Motor neuron (in vitro differentiated cells): ENCODE measurements at regions of chr17 and their contacts with region 1.

Region 1: GRCh38 chr17:45841883-45842525 is 2.7 kb upstream of the SPPL2C start:
- ATAC-seq: peak in 5 of 8 experiments; percentile 9 to 61 (median 35)
- H3K4me3 ChIP-seq: no peak overlapping the region
- H3K27ac ChIP-seq: no peak overlapping the region
- H3K4me1 ChIP-seq: no peaks in the 10 kb centered on the region

Region 2: GRCh38 chr17:45218895-45219661 is 622.9 kb before region 1 on chr17:
- in situ Hi-C with region 1: loop called in 1 of 9 experiments (anchors 25 kb)
- ATAC-seq: peak; percentile 56 to 93 (median 68)
- H3K4me3 ChIP-seq: no peak overlapping the region
- H3K27ac ChIP-seq: no peak overlapping the region
- H3K4me1 ChIP-seq: peaks cover 0 to 11% of the 10 kb centered on the region in 2 donors

Region 3: GRCh38 chr17:45740553-45741330 is 101.3 kb before region 1 on chr17:
- in situ Hi-C with region 1: loop called in 1 of 9 experiments (anchors 25 kb)
- ATAC-seq: peak; percentile 42 to 100 (median 100)
- H3K4me3 ChIP-seq: peak overlapping the region; percentile 13 to 37 (median 27)
- H3K27ac ChIP-seq: no peak overlapping the region
- H3K4me1 ChIP-seq: no peaks in the 10 kb centered on the region

Region 4: DNA sequence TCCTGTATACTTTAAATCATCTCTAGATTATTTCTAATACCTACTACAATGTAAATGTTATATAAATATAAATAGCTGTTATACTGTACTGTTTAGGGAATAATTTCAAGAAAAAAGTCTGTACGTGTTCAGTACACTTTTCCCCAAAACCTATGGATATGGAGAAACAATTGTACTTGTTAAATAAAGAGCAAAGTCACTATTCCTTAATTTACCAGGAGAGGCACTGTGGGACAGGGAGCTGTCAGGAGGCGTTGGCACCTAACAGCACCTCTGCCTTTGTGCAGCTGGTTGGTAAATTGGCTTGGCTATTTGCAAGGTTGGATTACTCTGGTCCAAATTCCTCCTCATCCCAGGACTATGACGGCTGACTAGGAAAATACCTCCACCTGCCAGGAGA is 29.9 kb before region 1 on chr17:
- in situ Hi-C with region 1: no loop called
- ATAC-seq: no peak
- H3K4me3 ChIP-seq: no peak overlapping the region
- H3K27ac ChIP-seq: no peak overlapping the region
- H3K4me1 ChIP-seq: peaks cover 0 to 8% of the 10 kb centered on the region in 2 donors

Region 5: GRCh38 chr17:45923511-45924268 is 81.7 kb after region 1 on chr17:
- in situ Hi-C with region 1: no loop called
- ATAC-seq: peak in 4 of 8 experiments; percentile 27 to 97 (median 81)
- H3K4me3 ChIP-seq: no peak overlapping the region
- H3K27ac ChIP-seq: no peak overlapping the region
- H3K4me1 ChIP-seq: peaks cover 0 to 4% of the 10 kb centered on the region in 2 donors